AG04449 (cell line): ENCODE measurements at regions of chr1 and their contacts with region 1.

Region 1: DNA sequence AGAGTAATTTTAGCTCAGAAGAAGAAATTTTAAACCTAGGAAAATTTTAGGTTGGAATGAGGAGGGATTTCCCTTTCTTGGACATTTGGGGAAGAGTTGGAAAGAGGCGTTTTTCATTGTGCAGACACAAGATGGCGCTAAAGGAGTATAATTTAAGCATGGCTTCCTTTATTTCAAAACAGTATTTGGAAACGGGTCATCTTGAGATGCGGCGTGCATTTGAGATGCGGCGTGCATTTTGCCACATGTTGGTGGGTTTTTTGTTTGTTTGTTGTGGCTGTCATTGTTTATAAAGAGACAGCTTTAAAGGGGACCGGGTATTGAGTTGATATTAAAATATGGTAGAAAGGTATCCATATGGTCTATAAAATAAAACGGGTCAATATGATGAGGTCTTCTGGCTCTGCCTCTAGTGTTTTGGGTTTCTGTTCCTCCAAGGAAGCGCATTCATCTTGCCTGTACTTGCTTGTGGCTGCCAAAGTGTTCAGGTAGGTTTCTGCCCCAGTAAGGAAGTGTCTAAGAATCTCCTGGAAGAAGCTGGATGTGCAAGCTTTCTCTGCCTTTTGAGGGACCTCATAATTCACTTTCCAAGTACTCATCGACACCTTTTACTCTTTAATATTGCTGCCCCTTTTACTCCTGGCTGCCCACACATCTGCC is 210.3 kb downstream of the SLC35F3 start:
- DNase-seq: no peak
- H3K4me3 ChIP-seq: no peak overlapping the region; the same call in 1 of the 2 replicates
- CTCF ChIP-seq: peak; percentile 47

Region 2: GRCh38 chr1:234125283-234125682 is 10.5 kb after region 1 on chr1:
- CTCF ChIA-PET with region 1: interaction called, 16 read pairs
- POLR2A ChIA-PET with region 1: no interaction called
- DNase-seq: no peak
- H3K4me3 ChIP-seq: no peak overlapping the region
- CTCF ChIP-seq: no peak